CD4-positive, alpha-beta T cell (primary cell): ENCODE measurements at regions of chr10 and their contacts with region 1.

Region 1: DNA sequence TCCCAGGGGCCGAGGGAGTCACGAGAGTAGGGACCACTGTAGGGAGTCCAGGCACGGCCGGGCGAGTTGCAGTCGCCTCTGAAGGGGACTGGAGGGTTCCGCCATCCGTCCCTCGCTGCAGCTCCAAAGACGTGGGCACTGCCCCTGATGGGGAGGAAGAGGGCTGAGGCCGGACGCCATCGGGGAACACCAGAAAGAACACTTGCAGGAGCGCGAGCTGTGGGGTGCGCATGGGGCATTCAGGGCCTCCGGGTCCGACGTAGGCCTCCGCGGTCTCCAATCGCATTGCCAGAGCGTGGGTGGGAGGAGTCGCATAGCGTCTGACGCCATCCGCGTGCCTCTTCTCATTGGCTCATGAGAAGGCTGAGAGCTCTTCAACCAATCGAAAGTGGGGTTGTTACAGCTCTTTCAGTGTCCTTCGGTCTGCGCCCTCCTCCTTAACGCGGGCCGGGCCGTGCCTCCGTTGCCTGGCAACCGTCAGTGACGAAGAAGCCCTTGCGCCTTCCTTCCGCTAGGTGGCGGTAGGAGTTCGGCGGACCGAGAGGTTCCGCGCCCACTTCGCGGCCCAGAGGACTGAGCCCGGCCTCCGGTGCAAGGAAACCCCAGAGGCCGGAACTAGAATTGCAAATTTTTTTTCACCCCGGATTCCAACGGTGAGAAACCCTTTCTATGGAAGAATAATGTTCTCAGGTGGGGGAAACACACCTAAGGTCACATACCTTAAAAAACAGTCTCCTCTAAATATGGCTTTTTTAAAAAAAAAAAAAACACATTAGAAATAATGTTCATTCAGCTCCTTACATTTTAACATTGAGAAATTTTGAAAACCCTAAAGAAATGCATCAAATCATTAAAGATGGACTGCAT is at the start of gene TCTN3:
- DNase-seq: peak; percentile 89 to 100 (median 94)
- ATAC-seq: peak; percentile 95
- H3K4me3 ChIP-seq: peak within 1 kb of the TSS; percentile 68
- H3K4me3 Mint-ChIP-seq: peak within 1 kb of the TSS; percentile 98
- H3K27ac ChIP-seq: peak within 1 kb of the TSS; percentile 60 to 77
- H3K27ac Mint-ChIP-seq: peak within 1 kb of the TSS; percentile 94
- H3K4me1 ChIP-seq: peaks cover 19% of the 10 kb centered on the region
- H3K4me1 Mint-ChIP-seq: peaks cover 44% of the 10 kb centered on the region
- H3K27me3 ChIP-seq: no peaks in the 10 kb centered on the region
- H3K27me3 Mint-ChIP-seq: peaks cover 6% of the 10 kb centered on the region
- CTCF ChIP-seq: peak; percentile 99
- total RNA-seq, gene TCTN3: 18.6 to 20.2 TPM

Region 2: GRCh38 chr10:94683348-94684054 is 1010.4 kb before region 1 on chr10 and contains the start of gene CYP2C18:
- CTCF ChIA-PET with region 1: no interaction called
- POLR2A ChIA-PET with region 1: no interaction called
- intact Hi-C with region 1: no loop called
- DNase-seq: no peak
- ATAC-seq: no peak
- H3K4me3 ChIP-seq: no peak within 1 kb of the TSS
- H3K4me3 Mint-ChIP-seq: no peak within 1 kb of the TSS
- H3K27ac ChIP-seq: no peak within 1 kb of the TSS
- H3K27ac Mint-ChIP-seq: no peak within 1 kb of the TSS
- H3K4me1 ChIP-seq: no peaks in the 10 kb centered on the region
- H3K4me1 Mint-ChIP-seq: no peaks in the 10 kb centered on the region
- H3K27me3 ChIP-seq: no peaks in the 10 kb centered on the region
- H3K27me3 Mint-ChIP-seq: peaks cover 5% of the 10 kb centered on the region
- CTCF ChIP-seq: no peak
- total RNA-seq, gene CYP2C18: not detected

Region 3: GRCh38 chr10:95561182-95562075 is 132.5 kb before region 1 on chr10 and contains the start of gene SORBS1:
- CTCF ChIA-PET with region 1: no interaction called
- POLR2A ChIA-PET with region 1: interaction called, 4 read pairs
- intact Hi-C with region 1: loop called in 1 of 2 experiments (anchors 2 kb)
- DNase-seq: peak; percentile 64 to 95 (median 80)
- ATAC-seq: peak; percentile 98
- H3K4me3 ChIP-seq: peak within 1 kb of the TSS; percentile 96
- H3K4me3 Mint-ChIP-seq: peak within 1 kb of the TSS; percentile 100
- H3K27ac ChIP-seq: no peak within 1 kb of the TSS
- H3K27ac Mint-ChIP-seq: peak within 1 kb of the TSS; percentile 72
- H3K4me1 ChIP-seq: peaks cover 14% of the 10 kb centered on the region
- H3K4me1 Mint-ChIP-seq: peaks cover 16% of the 10 kb centered on the region
- H3K27me3 ChIP-seq: peaks cover 0 to 3% of the 10 kb centered on the region in 2 experiments
- H3K27me3 Mint-ChIP-seq: no peaks in the 10 kb centered on the region
- CTCF ChIP-seq: no peak
- total RNA-seq, gene SORBS1: 1.4 to 1.8 TPM

Region 4: GRCh38 chr10:95706986-95707385 is 13.1 kb after region 1 on chr10:
- CTCF ChIA-PET with region 1: interaction called, 11 read pairs
- POLR2A ChIA-PET with region 1: interaction called, 3 read pairs
- intact Hi-C with region 1: no loop called
- DNase-seq: no peak
- ATAC-seq: no peak
- H3K4me3 ChIP-seq: no peak overlapping the region
- H3K4me3 Mint-ChIP-seq: no peak overlapping the region
- H3K27ac ChIP-seq: no peak overlapping the region
- H3K27ac Mint-ChIP-seq: no peak overlapping the region
- H3K4me1 ChIP-seq: no peaks in the 10 kb centered on the region
- H3K4me1 Mint-ChIP-seq: no peaks in the 10 kb centered on the region
- H3K27me3 ChIP-seq: no peaks in the 10 kb centered on the region
- H3K27me3 Mint-ChIP-seq: no peaks in the 10 kb centered on the region
- CTCF ChIP-seq: no peak

Region 5: DNA sequence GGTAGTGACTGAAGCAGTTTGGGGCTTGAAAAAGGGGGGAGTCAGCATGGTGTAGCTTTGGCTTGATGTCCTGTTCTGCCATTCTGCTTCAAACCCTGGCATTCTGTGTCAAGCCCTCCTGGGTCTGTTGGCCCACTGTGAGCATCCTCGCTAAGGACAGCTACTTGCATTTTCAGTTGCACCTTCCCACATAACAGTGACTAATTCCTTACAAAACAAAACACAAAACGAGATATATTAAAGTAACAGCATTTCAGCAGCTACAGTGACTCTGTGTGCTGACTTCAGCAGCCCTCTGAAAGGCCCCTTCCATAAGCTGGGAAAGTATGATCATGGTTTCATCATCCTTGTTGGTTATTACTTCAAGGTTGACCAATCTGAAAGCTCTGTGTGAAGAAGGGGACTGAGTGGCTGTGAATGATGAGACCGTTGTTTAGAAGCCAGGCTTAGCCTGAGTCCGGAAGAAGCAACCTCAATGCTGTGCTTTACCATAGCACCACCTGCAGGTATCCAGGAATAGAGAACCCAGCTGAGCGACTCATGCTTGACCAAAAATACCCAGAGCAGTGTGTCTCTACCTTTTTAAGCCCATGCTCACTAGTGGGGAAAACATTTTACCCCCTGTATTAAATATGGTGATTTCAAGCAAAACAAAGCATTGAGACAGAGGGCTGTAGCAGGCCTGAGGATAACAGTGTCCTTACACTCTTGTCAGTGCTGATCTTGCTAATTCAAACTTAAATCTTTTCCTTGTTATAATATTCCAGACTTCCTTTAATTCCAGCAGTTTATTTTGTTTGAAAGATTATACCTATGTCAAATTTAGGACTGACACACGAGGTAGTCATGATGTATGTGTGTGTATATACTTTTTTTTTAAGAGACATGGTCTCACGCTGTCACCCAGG is 171.3 kb after region 1 on chr10:
- CTCF ChIA-PET with region 1: interaction called, 22 read pairs
- POLR2A ChIA-PET with region 1: interaction called, 13 read pairs
- intact Hi-C with region 1: loop called (anchors 1 to 5 kb)
- DNase-seq: peak in 10 of 14 experiments; percentile 1 to 70 (median 10)
- ATAC-seq: peak; percentile 77
- H3K4me3 ChIP-seq: no peak overlapping the region
- H3K4me3 Mint-ChIP-seq: no peak overlapping the region
- H3K27ac ChIP-seq: no peak overlapping the region
- H3K27ac Mint-ChIP-seq: no peak overlapping the region
- H3K4me1 ChIP-seq: no peaks in the 10 kb centered on the region
- H3K4me1 Mint-ChIP-seq: peaks cover 4% of the 10 kb centered on the region
- H3K27me3 ChIP-seq: no peaks in the 10 kb centered on the region
- H3K27me3 Mint-ChIP-seq: no peaks in the 10 kb centered on the region
- CTCF ChIP-seq: peak; percentile 35

Region 6: GRCh38 chr10:96043033-96043932 is 349.4 kb after region 1 on chr10 and contains the start of gene CCNJ:
- CTCF ChIA-PET with region 1: interaction called, 4 read pairs
- POLR2A ChIA-PET with region 1: interaction called, 5 read pairs
- intact Hi-C with region 1: loop called (anchors 2 to 5 kb)
- DNase-seq: peak; percentile 64 to 91 (median 77)
- ATAC-seq: peak; percentile 84
- H3K4me3 ChIP-seq: peak within 1 kb of the TSS; percentile 98
- H3K4me3 Mint-ChIP-seq: peak within 1 kb of the TSS; percentile 95
- H3K27ac ChIP-seq: peak within 1 kb of the TSS; percentile 52 to 59
- H3K27ac Mint-ChIP-seq: peak within 1 kb of the TSS; percentile 80
- H3K4me1 ChIP-seq: peaks cover 21% of the 10 kb centered on the region
- H3K4me1 Mint-ChIP-seq: peaks cover 54% of the 10 kb centered on the region
- H3K27me3 ChIP-seq: peaks cover 4 to 5% of the 10 kb centered on the region in 2 experiments
- H3K27me3 Mint-ChIP-seq: peaks cover 8% of the 10 kb centered on the region
- CTCF ChIP-seq: no peak
- total RNA-seq, gene CCNJ: 6.9 to 8.0 TPM

Region 7: DNA sequence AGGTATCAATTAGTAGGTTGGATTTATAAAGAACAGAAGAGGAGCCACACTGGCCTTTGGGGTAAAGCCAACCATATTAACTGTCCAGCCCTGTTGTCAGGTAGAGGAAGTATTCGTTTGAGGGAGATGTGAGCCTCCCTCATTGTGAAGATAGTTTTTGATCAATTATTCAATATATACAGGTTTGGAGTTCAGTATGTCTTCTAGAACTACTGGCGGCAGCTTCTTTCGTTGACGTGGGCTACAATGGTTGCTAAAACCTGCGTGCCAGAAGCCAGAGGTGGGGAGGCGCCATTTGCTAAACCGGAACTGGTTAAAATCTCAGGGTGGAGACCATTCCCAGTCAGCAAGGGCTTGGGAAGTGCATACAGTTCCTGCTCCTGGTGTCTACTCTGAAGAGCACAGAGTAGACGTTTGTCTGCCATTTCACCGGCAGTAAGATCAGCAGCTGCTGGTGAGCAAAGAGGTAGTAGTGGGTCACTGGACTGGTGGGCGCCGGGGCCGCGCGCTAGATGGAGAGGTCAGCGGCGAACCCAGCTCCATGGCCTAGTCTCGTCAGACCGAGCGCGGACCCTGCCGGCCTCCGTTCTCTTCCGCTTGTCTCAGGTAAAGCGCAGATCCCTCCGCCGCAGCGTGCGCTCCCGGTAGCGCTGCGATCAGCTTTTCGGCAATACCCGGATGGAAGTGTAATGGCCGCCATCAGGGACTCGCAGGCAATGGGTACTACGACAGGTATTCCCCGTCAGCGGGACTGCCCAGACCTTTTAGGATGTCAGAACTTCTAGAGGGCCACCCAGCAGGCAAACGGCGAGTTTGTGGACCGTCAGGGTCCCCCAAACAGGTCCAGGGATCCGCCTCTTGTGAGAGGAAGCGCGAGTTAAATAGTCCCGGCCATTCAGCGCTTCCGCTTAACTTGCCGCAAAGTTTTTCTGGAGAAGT is 435.8 kb after region 1 on chr10 and contains the start of gene ZNF518A:
- CTCF ChIA-PET with region 1: interaction called, 12 read pairs
- POLR2A ChIA-PET with region 1: interaction called, 19 read pairs
- intact Hi-C with region 1: loop called (anchors 5 to 10 kb)
- DNase-seq: peak; percentile 79 to 97 (median 87)
- ATAC-seq: peak; percentile 82
- H3K4me3 ChIP-seq: peak within 1 kb of the TSS; percentile 67
- H3K4me3 Mint-ChIP-seq: peak within 1 kb of the TSS; percentile 93
- H3K27ac ChIP-seq: peak within 1 kb of the TSS; percentile 93 to 98
- H3K27ac Mint-ChIP-seq: peak within 1 kb of the TSS; percentile 99
- H3K4me1 ChIP-seq: peaks cover 14% of the 10 kb centered on the region
- H3K4me1 Mint-ChIP-seq: peaks cover 27% of the 10 kb centered on the region
- H3K27me3 ChIP-seq: peaks cover 7 to 36% of the 10 kb centered on the region in 2 experiments
- H3K27me3 Mint-ChIP-seq: peaks cover 62% of the 10 kb centered on the region
- CTCF ChIP-seq: no peak
- total RNA-seq, gene ZNF518A: 7.4 to 7.9 TPM

Region 8: DNA sequence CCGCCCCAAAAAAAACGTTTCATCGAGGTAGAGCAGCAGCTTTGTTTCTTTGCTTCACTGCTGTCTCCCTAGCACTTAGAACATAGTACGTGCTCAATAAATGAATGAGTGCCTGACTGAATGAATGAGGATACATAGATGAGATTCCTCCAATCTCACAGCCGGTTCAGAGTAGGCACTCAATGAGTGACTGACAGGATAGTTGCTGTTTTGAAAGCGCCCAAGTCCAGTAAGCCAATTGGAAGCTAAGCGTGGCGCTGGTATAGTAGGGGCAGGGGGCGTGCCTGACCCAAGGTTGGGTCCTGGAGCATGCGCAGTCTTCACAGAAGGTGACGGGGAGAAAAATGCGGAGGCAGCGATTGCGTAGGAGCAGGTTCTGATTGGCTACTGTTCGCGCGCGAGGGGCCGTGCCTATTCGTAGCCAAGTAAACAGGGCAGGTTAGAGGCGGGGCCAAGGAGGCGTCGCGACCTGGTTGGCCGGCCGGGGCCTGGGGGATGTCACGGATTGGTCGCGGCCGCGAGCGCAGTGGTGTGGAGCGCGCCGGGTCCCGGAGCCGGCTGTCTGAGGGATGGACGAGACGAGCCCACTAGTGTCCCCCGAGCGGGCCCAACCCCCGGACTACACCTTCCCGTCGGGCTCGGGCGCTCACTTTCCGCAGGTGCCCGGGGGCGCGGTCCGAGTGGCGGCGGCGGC is 1946.4 kb after region 1 on chr10 and contains the start of gene PI4K2A:
- CTCF ChIA-PET with region 1: no interaction called
- POLR2A ChIA-PET with region 1: no interaction called
- intact Hi-C with region 1: loop called in 1 of 2 experiments (anchors 10 kb)
- DNase-seq: peak; percentile 96 to 100 (median 98)
- ATAC-seq: peak; percentile 97
- H3K4me3 ChIP-seq: peak within 1 kb of the TSS; percentile 65
- H3K4me3 Mint-ChIP-seq: peak within 1 kb of the TSS; percentile 98
- H3K27ac ChIP-seq: no peak within 1 kb of the TSS
- H3K27ac Mint-ChIP-seq: peak within 1 kb of the TSS; percentile 88
- H3K4me1 ChIP-seq: peaks cover 15% of the 10 kb centered on the region
- H3K4me1 Mint-ChIP-seq: peaks cover 26% of the 10 kb centered on the region
- H3K27me3 ChIP-seq: no peaks in the 10 kb centered on the region
- H3K27me3 Mint-ChIP-seq: no peaks in the 10 kb centered on the region
- CTCF ChIP-seq: no peak
- total RNA-seq, gene PI4K2A: 26.3 to 27.2 TPM